Activated CD4-positive, alpha-beta T cell treated with anti-CD3 and anti-CD28 coated beads for 36 hours (primary cell): ENCODE measurements at regions of chr17 and their contacts with region 1.

Region 1: DNA sequence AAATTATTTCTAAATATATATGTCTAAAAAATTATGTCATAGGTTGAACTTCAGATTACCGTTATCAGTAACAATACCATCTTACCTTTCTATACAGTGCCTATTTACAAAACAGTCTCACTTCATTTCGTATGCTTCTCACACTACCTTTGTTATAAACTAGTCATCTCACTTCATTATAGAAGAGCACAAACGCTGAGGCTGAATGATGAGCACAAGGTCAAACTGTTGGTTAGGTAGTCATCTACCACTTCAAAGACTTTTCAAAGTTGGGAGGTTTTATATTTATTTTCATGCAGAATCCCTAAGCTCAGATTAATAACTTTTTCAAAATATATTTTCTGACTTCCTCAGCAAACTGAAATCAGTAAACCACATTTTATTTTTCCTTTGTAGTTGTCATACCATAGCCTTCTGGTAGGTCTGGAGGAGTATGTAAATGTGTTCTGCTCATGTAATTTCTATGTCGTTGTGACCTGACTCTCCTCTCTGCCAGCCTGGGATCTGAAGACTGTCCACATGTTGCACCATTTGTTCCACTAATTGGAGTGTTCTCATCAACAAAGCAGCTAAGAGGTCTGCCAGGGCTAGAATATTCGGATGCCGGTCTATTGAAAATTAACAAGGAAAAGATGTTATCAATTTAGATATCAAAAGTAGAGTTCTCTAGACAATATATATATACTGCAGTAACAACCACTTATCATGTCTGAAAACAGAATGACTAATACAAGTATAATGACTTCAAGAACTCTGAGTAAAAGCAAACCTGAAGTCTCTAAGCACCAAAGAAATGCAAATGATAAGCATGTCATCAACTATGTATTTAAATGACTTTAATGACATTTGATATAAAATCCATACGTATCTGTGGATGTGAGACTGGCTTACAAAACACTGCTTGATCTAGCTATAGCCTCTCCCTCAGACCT is 73.9 kb downstream of the CEP95 start:
- DNase-seq: peak; percentile 30
- ATAC-seq: peak; percentile 92
- H3K4me3 Mint-ChIP-seq: peak overlapping the region; percentile 15
- H3K27ac Mint-ChIP-seq: peak overlapping the region; percentile 85
- H3K4me1 Mint-ChIP-seq: peaks cover 26% of the 10 kb centered on the region
- H3K27me3 Mint-ChIP-seq: no peaks in the 10 kb centered on the region

Region 2: GRCh38 chr17:64599187-64599676 is 18.6 kb after region 1 on chr17:
- CTCF ChIA-PET with region 1: interaction called, 7 read pairs
- POLR2A ChIA-PET with region 1: no interaction called
- intact Hi-C with region 1: loop called in 1 of 2 experiments (anchors 2 kb)
- DNase-seq: peak; percentile 78
- ATAC-seq: peak; percentile 99
- H3K4me3 Mint-ChIP-seq: peak overlapping the region; percentile 68
- H3K27ac Mint-ChIP-seq: peak overlapping the region; percentile 74
- H3K4me1 Mint-ChIP-seq: peaks cover 40% of the 10 kb centered on the region
- H3K27me3 Mint-ChIP-seq: no peaks in the 10 kb centered on the region

Region 3: DNA sequence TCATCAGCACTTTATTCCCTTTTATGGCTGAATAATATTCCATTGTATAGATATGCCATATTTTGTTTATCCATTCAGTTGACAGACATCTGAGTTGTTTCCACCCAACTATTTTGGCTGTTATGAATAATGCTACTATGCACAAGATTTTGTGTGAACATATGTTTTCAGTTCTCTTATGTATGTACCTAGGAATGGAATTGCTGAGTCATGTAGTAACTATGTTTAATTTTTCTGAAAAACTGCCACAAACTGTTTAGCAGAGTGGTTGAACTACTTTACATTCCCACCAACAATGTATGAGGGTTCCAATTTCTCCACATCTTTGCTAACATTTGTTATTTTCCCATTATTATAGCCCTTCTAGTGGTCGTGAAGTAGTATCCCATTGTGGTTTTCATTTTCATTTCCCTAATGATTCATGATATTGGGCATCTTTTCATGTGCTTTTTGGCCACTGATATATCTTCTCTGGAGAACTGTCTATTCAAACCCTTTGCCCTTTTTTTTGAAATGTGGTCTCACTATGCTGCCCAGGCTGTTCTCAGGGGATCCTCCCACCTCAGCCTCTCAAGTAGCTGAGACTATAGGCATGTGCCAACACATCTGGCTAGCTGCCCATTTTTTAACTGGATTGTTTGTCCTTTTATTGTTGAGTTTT is 55.1 kb after region 1 on chr17:
- CTCF ChIA-PET with region 1: interaction called, 3 read pairs
- POLR2A ChIA-PET with region 1: no interaction called
- intact Hi-C with region 1: loop called (anchors 1 to 2 kb)
- DNase-seq: peak; percentile 29
- ATAC-seq: peak; percentile 79
- H3K4me3 Mint-ChIP-seq: no peak overlapping the region
- H3K27ac Mint-ChIP-seq: peak overlapping the region; percentile 79
- H3K4me1 Mint-ChIP-seq: peaks cover 54% of the 10 kb centered on the region
- H3K27me3 Mint-ChIP-seq: no peaks in the 10 kb centered on the region

Region 4: DNA sequence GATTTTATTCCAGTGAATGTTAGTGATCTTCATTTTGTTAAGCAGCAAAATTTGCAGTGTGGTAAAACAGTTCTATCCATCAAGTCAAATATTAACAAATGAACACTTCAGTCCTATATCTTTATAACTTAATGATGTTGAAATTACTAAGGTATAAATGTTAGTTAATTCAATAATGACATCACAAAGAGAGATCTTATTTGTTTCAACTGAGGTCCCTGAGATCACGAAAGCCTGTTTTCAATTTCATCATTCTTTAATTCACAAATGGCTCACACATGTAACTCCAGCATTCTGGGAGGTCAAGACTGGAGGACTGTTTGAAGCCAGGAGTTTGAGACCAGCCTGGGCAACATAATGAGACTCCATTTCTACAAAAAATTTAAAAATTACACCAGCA is 67.6 kb after region 1 on chr17:
- CTCF ChIA-PET with region 1: interaction called, 4 read pairs
- POLR2A ChIA-PET with region 1: no interaction called
- intact Hi-C with region 1: loop called (anchors 1 to 2 kb)
- DNase-seq: no peak
- ATAC-seq: no peak
- H3K4me3 Mint-ChIP-seq: no peak overlapping the region
- H3K27ac Mint-ChIP-seq: peak overlapping the region; percentile 89
- H3K4me1 Mint-ChIP-seq: peaks cover 37% of the 10 kb centered on the region
- H3K27me3 Mint-ChIP-seq: no peaks in the 10 kb centered on the region

Region 5: GRCh38 chr17:64653325-64653984 is 72.8 kb after region 1 on chr17:
- CTCF ChIA-PET with region 1: interaction called, 3 read pairs
- POLR2A ChIA-PET with region 1: no interaction called
- intact Hi-C with region 1: loop called (anchors 1 to 2 kb)
- DNase-seq: no peak
- ATAC-seq: no peak
- H3K4me3 Mint-ChIP-seq: no peak overlapping the region
- H3K27ac Mint-ChIP-seq: peak overlapping the region; percentile 43
- H3K4me1 Mint-ChIP-seq: peaks cover 42% of the 10 kb centered on the region
- H3K27me3 Mint-ChIP-seq: no peaks in the 10 kb centered on the region